Left lung (tissue), 14 donors: ENCODE measurements at regions of chr5 and their contacts with region 1.

Region 1: DNA sequence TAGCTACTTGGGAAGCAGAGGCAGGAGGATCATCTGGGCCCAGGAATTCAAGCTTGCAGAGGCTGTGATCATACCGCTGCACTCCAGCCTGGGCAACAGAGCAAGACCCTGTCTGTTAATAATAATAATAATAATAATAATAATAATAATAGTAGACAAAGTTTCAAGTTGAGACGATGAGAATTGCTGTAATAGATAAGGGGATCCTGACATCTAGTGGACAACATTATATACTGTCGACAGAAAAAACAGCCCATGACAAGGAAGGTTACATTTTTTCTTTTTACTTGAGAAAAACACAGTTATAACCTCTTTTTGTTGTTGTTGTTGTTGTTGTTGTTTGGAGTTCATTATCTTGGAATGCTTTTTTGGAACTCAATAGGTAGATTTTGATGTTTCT is 35.3 kb downstream of the NDFIP1 start:
- DNase-seq: peak in 1 of 4 donors; percentile 35
- ATAC-seq: peak; percentile 59
- H3K4me3 ChIP-seq: no peak overlapping the region
- H3K27ac ChIP-seq: no peak overlapping the region
- H3K4me1 ChIP-seq: no peaks in the 10 kb centered on the region
- H3K27me3 ChIP-seq: no peaks in the 10 kb centered on the region
- CTCF ChIP-seq: peak; percentile 36 to 48

Region 2: DNA sequence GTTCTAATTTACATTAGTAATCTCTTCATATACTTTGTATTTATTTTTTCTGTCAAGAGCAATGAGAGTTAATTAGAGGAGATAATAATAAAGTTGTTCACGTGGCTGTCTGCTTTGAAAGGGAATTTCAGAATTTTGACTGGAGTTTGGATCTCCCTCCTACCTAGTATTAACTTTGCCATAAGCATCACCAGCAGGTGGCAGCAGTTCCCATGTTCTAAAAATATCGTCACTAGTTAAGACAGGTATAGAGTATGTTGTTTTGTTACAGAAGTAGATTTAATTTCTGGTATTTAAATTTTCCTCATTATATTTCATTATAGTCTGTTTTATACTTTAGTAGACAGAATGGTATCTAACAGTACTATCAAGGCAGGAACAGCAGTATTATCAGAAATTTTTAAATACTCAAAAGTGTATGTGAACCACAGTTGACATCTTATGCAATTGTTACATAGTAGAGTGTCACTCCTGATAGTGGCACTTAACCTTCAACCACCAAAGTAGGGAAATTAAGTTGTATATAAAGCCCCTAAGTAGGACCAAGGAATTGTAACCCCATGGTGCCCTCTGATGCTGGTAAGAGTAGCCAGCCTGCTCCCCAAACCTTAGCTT is 151.4 kb before region 1 on chr5:
- intact Hi-C with region 1: loop called in 1 of 2 experiments (anchors 5 kb)
- DNase-seq: peak in 2 of 4 donors; percentile 59 to 77
- ATAC-seq: peak; percentile 92
- H3K4me3 ChIP-seq: no peak overlapping the region
- H3K27ac ChIP-seq: no peak overlapping the region
- H3K4me1 ChIP-seq: no peaks in the 10 kb centered on the region
- H3K27me3 ChIP-seq: no peaks in the 10 kb centered on the region
- CTCF ChIP-seq: peak; percentile 77 to 84